ENCODE measurements at regions of chr1 and their contacts with region 1.

Region 1: GRCh38 chr1:204828338-204828850 is 42.3 kb upstream of the NFASC start:
- DNase-seq: peak; percentile 88
- ATAC-seq: peak; percentile 82
- H3K4me3 Mint-ChIP-seq: peak overlapping the region; percentile 73
- H3K27ac Mint-ChIP-seq: no peak overlapping the region
- H3K4me1 Mint-ChIP-seq: peaks cover 34% of the 10 kb centered on the region
- H3K27me3 Mint-ChIP-seq: peaks cover 22% of the 10 kb centered on the region
- CTCF ChIP-seq: no peak

Region 2: GRCh38 chr1:204782118-204782700 is 46.2 kb before region 1 on chr1:
- CTCF ChIA-PET with region 1: no interaction called
- POLR2A ChIA-PET with region 1: no interaction called
- DNase-seq: no peak
- ATAC-seq: no peak
- H3K4me3 Mint-ChIP-seq: no peak overlapping the region
- H3K27ac Mint-ChIP-seq: no peak overlapping the region
- H3K4me1 Mint-ChIP-seq: peaks cover 9% of the 10 kb centered on the region
- H3K27me3 Mint-ChIP-seq: no peaks in the 10 kb centered on the region; the same call in none of the 2 replicates
- CTCF ChIP-seq: no peak

Region 3: DNA sequence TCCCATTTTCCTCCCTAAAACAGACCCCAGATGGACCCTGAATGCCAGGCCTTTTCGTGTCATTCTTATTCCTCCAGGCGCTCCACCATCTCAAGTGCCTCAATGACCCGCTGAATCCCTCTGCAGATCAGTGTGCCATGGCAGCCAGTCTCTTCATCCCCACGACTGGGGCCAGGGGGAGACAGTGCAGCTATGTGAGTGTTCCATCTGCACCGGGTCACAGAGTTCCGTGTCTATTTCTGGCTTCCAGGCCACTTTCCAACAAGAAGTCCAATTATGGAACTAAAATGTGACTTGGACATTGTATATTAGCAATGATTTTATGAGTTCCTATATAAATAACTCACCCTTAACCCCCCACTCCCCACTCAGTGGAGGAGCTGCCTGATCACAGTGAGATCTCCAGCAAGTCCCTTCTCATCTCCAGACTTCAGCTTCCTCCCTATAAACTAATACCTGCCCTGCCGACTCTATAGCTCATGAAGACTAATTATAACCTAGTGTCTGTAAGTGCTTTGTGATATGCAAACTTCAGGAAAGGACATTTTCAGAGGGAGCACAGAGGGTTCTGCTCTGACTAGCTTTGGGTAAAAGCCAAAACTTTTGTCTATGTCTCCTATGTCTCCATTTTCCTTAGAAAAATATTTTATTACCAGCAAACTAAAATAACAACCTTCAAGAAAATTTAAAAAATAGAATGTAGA is 14.1 kb before region 1 on chr1:
- CTCF ChIA-PET with region 1: interaction called, 10 read pairs
- POLR2A ChIA-PET with region 1: no interaction called
- DNase-seq: no peak
- ATAC-seq: no peak
- H3K4me3 Mint-ChIP-seq: no peak overlapping the region
- H3K27ac Mint-ChIP-seq: no peak overlapping the region
- H3K4me1 Mint-ChIP-seq: no peaks in the 10 kb centered on the region
- H3K27me3 Mint-ChIP-seq: peaks cover 5% of the 10 kb centered on the region; the same call in 1 of the 2 replicates
- CTCF ChIP-seq: no peak

Region 4: GRCh38 chr1:204997591-204998355 is 169.4 kb after region 1 on chr1:
- CTCF ChIA-PET with region 1: no interaction called
- POLR2A ChIA-PET with region 1: no interaction called
- DNase-seq: no peak
- ATAC-seq: no peak
- H3K4me3 Mint-ChIP-seq: no peak overlapping the region
- H3K27ac Mint-ChIP-seq: 0 out of 2 replicates have a peak overlapping the region, but pooled peaks have one; percentile 22
- H3K4me1 Mint-ChIP-seq: peaks cover 10% of the 10 kb centered on the region
- H3K27me3 Mint-ChIP-seq: peaks cover 37% of the 10 kb centered on the region
- CTCF ChIP-seq: no peak